Panc1 (cell line): ENCODE measurements at regions of chr6 and their contacts with region 1.

Region 1: GRCh38 chr6:166950443-166950821 is 5.9 kb downstream of the RNASET2 start:
- DNase-seq: no peak
- ATAC-seq: no peak
- H3K4me3 ChIP-seq: no peak overlapping the region
- H3K27ac ChIP-seq: no peak overlapping the region
- H3K4me1 ChIP-seq: no peaks in the 10 kb centered on the region
- H3K27me3 ChIP-seq: no peaks in the 10 kb centered on the region
- CTCF ChIP-seq: no peak

Region 2: GRCh38 chr6:166775180-166776081 is 175.0 kb before region 1 on chr6:
- CTCF ChIA-PET with region 1: interaction called, 13 read pairs
- POLR2A ChIA-PET with region 1: no interaction called
- in situ Hi-C with region 1: no loop called
- intact Hi-C with region 1: no loop called
- DNase-seq: peak; percentile 47
- ATAC-seq: peak; percentile 68; the same call in 1 of the 2 replicates
- H3K4me3 ChIP-seq: peak overlapping the region in 1 of 2 experiments; percentile 0; a peak in 1 of 4 replicates
- H3K27ac ChIP-seq: no peak overlapping the region
- H3K4me1 ChIP-seq: peaks cover 10% of the 10 kb centered on the region
- H3K27me3 ChIP-seq: peaks cover 13% of the 10 kb centered on the region; the same call in 1 of the 2 replicates
- CTCF ChIP-seq: peak; percentile 98

Region 3: GRCh38 chr6:166786704-166787293 is 163.6 kb before region 1 on chr6:
- CTCF ChIA-PET with region 1: no interaction called
- POLR2A ChIA-PET with region 1: no interaction called
- in situ Hi-C with region 1: no loop called
- intact Hi-C with region 1: loop called (anchors 1 kb)
- DNase-seq: peak; percentile 38
- ATAC-seq: peak; percentile 83
- H3K4me3 ChIP-seq: no peak overlapping the region
- H3K27ac ChIP-seq: no peak overlapping the region
- H3K4me1 ChIP-seq: no peaks in the 10 kb centered on the region
- H3K27me3 ChIP-seq: peaks cover 3% of the 10 kb centered on the region; the same call in 1 of the 2 replicates
- CTCF ChIP-seq: peak; percentile 83; the same call in 1 of the 2 replicates

Region 4: DNA sequence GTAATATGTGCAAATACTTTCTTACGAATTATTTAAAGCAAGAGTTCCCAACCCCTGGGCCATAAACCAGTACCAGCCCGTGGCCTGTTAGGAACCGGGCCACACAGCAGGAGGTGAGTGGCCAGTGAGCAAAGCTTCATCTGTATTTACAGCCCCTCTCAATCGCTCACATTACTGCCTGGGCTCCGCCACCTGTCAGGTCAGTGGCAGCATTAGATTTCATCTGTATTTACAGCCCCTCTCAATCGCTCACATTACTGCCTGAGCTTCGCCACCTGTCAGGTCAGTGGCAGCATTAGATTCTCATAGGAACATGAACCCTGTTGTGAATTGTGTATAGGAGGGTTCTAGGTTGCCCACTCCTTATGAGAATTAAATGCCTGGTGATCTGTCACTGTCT is 136.0 kb before region 1 on chr6:
- CTCF ChIA-PET with region 1: no interaction called
- POLR2A ChIA-PET with region 1: no interaction called
- in situ Hi-C with region 1: no loop called
- intact Hi-C with region 1: no loop called
- DNase-seq: no peak
- ATAC-seq: no peak
- H3K4me3 ChIP-seq: no peak overlapping the region
- H3K27ac ChIP-seq: no peak overlapping the region
- H3K4me1 ChIP-seq: no peaks in the 10 kb centered on the region
- H3K27me3 ChIP-seq: peaks cover 9% of the 10 kb centered on the region
- CTCF ChIP-seq: no peak